Mammary epithelial cell (primary cell): ENCODE measurements at regions of chr1 and their contacts with region 1.

Region 1: GRCh38 chr1:235843461-235843961 is 23.2 kb downstream of the LYST start:
- DNase-seq: peak; percentile 41
- H3K4me3 ChIP-seq: no peak overlapping the region
- H3K27ac ChIP-seq: no peak overlapping the region
- H3K4me1 ChIP-seq: no peaks in the 10 kb centered on the region
- H3K27me3 ChIP-seq: no peaks in the 10 kb centered on the region
- CTCF ChIP-seq: peak; percentile 67 to 71

Region 2: DNA sequence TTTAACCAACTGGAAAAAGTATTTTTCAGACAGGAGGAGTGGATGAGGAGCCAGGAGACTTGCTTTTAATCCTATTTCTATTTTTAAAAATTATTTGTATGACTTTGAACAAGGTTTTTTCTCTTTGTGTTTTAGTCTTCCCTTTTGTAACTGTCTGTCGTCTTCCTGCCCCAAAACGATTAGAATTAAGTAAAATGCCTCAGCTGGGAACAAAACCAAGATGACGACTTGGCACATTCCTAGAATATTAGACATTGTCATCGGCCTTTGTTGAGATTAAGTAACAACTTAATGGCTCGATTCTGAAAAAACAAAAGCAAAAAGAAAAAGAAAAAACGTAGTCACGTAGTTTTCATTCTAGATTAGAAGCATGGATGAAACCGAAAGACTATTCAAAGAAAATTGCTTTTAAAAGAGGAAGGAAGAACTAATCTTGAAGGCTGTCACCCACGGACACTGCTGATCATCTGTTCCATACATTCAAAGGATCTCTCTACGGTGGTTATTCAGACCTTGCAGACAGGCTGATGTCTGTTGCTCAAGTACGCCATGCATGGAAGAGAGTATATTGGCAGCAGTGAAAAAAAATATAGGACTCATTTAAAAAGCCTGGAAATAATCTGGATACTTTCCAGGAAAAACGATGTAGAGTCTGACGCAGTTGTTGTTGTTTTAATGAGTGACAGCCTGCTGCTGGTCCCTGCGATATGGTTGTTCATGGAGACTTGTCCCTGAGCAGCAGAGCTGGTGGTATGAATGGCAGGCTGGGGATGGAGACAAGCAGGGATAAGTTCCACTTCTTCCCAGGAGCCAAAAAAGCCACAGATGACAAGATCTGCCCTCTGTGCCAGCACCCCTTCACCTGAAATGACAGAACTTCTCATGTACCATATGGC is 210.8 kb before region 1 on chr1:
- CTCF ChIA-PET with region 1: no interaction called
- dilution Hi-C with region 1: no loop called
- in situ Hi-C with region 1: no loop called
- intact Hi-C with region 1: no loop called
- DNase-seq: peak; percentile 26
- H3K4me3 ChIP-seq: peak overlapping the region in 2 of 3 experiments; percentile 26 to 29
- H3K27ac ChIP-seq: no peak overlapping the region
- H3K4me1 ChIP-seq: peaks cover 4% of the 10 kb centered on the region
- H3K27me3 ChIP-seq: no peaks in the 10 kb centered on the region
- CTCF ChIP-seq: no peak

Region 3: GRCh38 chr1:235809688-235810397 is 33.7 kb before region 1 on chr1:
- CTCF ChIA-PET with region 1: no interaction called
- dilution Hi-C with region 1: loop called (anchors 5 kb)
- in situ Hi-C with region 1: no loop called
- intact Hi-C with region 1: no loop called
- DNase-seq: no peak
- H3K4me3 ChIP-seq: no peak overlapping the region
- H3K27ac ChIP-seq: no peak overlapping the region
- H3K4me1 ChIP-seq: no peaks in the 10 kb centered on the region
- H3K27me3 ChIP-seq: no peaks in the 10 kb centered on the region
- CTCF ChIP-seq: no peak

Region 4: GRCh38 chr1:235866913-235867845 is 23.7 kb after region 1 on chr1:
- CTCF ChIA-PET with region 1: no interaction called
- dilution Hi-C with region 1: no loop called
- in situ Hi-C with region 1: no loop called
- intact Hi-C with region 1: no loop called
- DNase-seq: peak; percentile 95
- H3K4me3 ChIP-seq: peak overlapping the region; percentile 92 to 94 (median 93)
- H3K27ac ChIP-seq: peak overlapping the region; percentile 45
- H3K4me1 ChIP-seq: peaks cover 25% of the 10 kb centered on the region
- H3K27me3 ChIP-seq: no peaks in the 10 kb centered on the region
- CTCF ChIP-seq: no peak

Region 5: GRCh38 chr1:235878082-235878811 is 34.7 kb after region 1 on chr1:
- CTCF ChIA-PET with region 1: no interaction called
- dilution Hi-C with region 1: loop called (anchors 5 kb)
- in situ Hi-C with region 1: no loop called
- intact Hi-C with region 1: no loop called
- DNase-seq: peak; percentile 24
- H3K4me3 ChIP-seq: no peak overlapping the region
- H3K27ac ChIP-seq: no peak overlapping the region
- H3K4me1 ChIP-seq: peaks cover 2% of the 10 kb centered on the region
- H3K27me3 ChIP-seq: no peaks in the 10 kb centered on the region
- CTCF ChIP-seq: no peak